Activated CD4-positive, alpha-beta T cell treated with anti-CD3 and anti-CD28 coated beads, Interleukin-2, amount 10 ng/mL, durations not matched to agents 24 days and 14 days (primary cell): ENCODE measurements at regions of chr1 and their contacts with region 1.

Region 1: DNA sequence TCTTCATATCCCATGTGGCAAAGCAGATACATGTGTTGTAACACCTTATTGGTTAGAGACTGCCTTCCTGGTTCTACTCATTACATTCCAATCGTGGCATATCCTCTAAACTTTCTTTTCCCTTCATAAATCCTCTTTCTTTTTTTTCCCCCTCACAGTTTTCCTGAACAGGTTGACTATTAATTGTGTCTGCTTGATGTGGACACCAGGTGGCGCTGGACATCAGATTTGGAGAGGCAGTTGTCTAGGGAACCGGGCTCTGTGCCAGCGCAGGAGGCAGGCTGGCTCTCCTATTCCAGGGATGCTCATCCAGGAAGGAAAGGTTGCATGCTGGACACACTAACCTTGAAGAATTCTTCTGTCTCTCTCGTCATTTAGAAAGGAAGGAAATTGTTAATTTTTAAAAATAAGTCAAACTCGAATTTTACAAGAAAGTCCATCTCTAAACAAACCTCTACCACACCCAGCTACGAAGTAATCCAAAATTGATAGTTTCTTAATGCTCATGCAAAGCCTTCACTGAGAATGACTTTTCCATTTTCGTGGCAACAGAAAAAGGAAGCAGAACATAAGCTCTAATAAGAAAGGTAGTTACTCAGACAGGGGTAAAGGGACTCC is 59.4 kb upstream of the ASB17 start:
- DNase-seq: peak; percentile 86
- H3K4me3 Mint-ChIP-seq: no peak overlapping the region
- H3K27ac Mint-ChIP-seq: no peak overlapping the region
- H3K4me1 Mint-ChIP-seq: no peaks in the 10 kb centered on the region
- H3K27me3 Mint-ChIP-seq: peaks cover 2% of the 10 kb centered on the region

Region 2: DNA sequence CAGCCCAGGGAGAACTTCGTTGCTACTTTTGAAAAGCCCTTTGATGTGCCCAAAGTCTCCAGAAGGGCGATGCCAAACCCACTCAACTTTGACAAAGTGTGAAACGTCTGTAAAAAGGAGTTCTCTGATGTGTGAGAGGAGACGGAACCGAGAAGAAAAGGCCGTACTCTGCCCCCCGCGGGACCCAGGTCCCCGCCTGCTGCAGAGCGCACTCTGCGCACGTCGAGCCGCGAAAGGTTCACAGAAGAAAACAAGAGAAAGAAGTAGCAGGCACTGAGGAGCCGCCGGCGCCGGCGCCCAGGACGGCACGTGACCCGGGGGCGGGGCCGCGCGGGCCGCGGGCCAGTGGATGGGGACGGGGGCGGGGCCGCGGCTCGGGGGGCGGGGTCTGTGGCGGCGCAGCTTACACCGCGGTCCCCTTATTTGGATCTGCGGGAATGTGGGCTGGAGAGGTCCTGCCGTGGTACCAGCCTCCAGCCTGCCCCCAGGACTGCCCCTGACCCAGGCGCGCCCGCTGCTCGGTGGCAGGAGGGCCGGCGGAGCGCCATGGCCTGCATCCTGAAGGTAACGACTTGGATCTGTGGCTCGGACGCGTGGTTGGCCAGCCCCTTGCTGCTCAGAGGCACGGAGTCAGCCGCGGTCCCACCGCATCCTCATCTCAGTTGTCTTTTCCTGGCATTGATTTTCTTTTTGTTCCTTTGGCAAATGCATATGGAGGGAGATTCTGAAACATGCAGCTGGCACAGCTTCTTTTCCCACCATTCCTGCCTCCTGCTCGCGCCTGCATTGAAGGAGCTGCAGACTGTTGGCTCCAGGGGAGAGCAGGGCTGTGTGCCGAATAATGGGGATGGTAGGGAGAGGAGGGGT is 82.9 kb after region 1 on chr1 and contains the start of gene ST6GALNAC3:
- intact Hi-C with region 1: loop called (anchors 10 kb)
- DNase-seq: peak; percentile 93
- H3K4me3 Mint-ChIP-seq: peak within 1 kb of the TSS; percentile 86
- H3K27ac Mint-ChIP-seq: peak within 1 kb of the TSS; percentile 47
- H3K4me1 Mint-ChIP-seq: peaks cover 13% of the 10 kb centered on the region
- H3K27me3 Mint-ChIP-seq: peaks cover 18% of the 10 kb centered on the region
- total RNA-seq, gene ST6GALNAC3: 0.28 TPM in 1 of 2 replicates, not detected in the other

Region 3: DNA sequence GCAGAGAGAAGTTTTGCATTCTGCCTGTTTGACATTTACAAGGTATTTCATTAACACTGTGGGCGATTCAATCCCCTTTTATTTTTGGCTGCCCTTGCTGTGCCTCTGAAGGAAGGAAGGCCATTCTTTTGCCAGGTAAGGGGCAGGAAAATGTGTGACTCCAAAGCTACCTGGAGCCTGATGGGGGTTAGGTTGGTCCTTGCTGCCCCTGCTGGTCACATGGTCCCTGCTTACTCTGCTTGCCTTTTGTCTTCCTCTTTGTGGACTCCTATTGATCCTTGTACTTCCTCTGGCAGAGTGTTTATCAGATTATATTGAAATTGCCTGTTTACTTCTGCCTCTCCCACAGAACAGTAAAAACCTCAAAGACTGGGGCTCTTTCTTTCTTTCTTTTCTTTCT is 148.6 kb after region 1 on chr1:
- intact Hi-C with region 1: loop called (anchors 10 kb)
- DNase-seq: no peak
- H3K4me3 Mint-ChIP-seq: no peak overlapping the region
- H3K27ac Mint-ChIP-seq: no peak overlapping the region
- H3K4me1 Mint-ChIP-seq: no peaks in the 10 kb centered on the region
- H3K27me3 Mint-ChIP-seq: no peaks in the 10 kb centered on the region